Activated CD8-positive, alpha-beta T cell treated with anti-CD3 and anti-CD28 coated beads for 36 hours (primary cell): ENCODE measurements at regions of chr13 and their contacts with region 1.

Region 1: DNA sequence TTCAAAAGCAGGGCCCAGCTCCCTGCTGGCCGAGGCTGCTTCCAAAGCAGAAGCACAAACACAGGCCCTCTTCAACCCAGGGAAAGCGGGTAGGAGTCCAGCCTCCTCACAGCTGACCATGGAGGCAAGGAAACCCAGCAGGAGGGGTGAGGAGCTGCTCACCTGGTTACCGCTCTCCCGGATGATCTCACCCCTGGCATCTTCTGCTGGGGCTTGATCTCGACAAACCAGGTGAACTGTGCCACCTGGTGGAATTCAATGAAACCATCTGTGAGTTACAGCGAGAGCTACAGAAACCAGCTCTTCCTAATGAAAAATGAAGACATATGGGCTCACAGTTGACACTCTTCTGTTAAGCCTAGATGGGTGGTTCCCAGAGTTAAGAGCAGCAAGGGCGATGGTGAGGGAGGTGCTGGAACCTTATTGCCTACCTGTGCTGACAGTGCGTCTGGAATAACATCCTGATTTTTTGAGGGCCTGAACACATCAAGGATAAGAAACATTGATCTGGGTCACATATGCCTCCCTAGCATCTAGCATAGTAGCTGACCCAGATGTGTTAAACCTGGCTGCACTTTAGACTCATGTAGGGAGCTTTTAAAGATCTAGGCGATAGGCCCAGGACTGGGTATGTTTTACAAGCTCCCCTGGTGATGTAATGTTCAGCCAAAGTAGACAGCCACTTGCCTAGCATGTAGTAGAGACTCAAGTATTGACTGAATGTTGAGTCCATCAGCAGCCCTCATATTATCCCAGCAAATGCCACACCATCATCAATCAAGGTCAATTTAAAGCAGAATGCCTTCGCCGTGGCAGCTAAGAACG is 6.1 kb downstream of the DHRS12 start:
- DNase-seq: peak; percentile 73
- ATAC-seq: peak; percentile 55
- H3K4me3 Mint-ChIP-seq: no peak overlapping the region
- H3K27ac Mint-ChIP-seq: no peak overlapping the region
- H3K4me1 Mint-ChIP-seq: peaks cover 42% of the 10 kb centered on the region
- H3K27me3 Mint-ChIP-seq: no peaks in the 10 kb centered on the region
- CTCF ChIP-seq: peak; percentile 55

Region 2: GRCh38 chr13:51125498-51126226 is 672.2 kb before region 1 on chr13:
- CTCF ChIA-PET with region 1: interaction called, 21 read pairs
- POLR2A ChIA-PET with region 1: no interaction called
- intact Hi-C with region 1: no loop called
- DNase-seq: peak; percentile 67
- ATAC-seq: peak; percentile 72
- H3K4me3 Mint-ChIP-seq: no peak overlapping the region
- H3K27ac Mint-ChIP-seq: no peak overlapping the region
- H3K4me1 Mint-ChIP-seq: peaks cover 14% of the 10 kb centered on the region
- H3K27me3 Mint-ChIP-seq: peaks cover 19% of the 10 kb centered on the region
- CTCF ChIP-seq: peak; percentile 77

Region 3: GRCh38 chr13:51419001-51419636 is 378.8 kb before region 1 on chr13:
- CTCF ChIA-PET with region 1: interaction called, 10 read pairs
- POLR2A ChIA-PET with region 1: no interaction called
- intact Hi-C with region 1: no loop called
- DNase-seq: no peak
- ATAC-seq: no peak
- H3K4me3 Mint-ChIP-seq: no peak overlapping the region
- H3K27ac Mint-ChIP-seq: no peak overlapping the region
- H3K4me1 Mint-ChIP-seq: peaks cover 73% of the 10 kb centered on the region
- H3K27me3 Mint-ChIP-seq: no peaks in the 10 kb centered on the region
- CTCF ChIP-seq: no peak

Region 4: GRCh38 chr13:51444922-51445321 is 353.0 kb before region 1 on chr13:
- CTCF ChIA-PET with region 1: interaction called, 29 read pairs
- POLR2A ChIA-PET with region 1: interaction called, 7 read pairs
- intact Hi-C with region 1: no loop called
- DNase-seq: no peak
- ATAC-seq: no peak
- H3K4me3 Mint-ChIP-seq: no peak overlapping the region
- H3K27ac Mint-ChIP-seq: no peak overlapping the region
- H3K4me1 Mint-ChIP-seq: peaks cover 16% of the 10 kb centered on the region
- H3K27me3 Mint-ChIP-seq: no peaks in the 10 kb centered on the region
- CTCF ChIP-seq: peak; percentile 33

Region 5: GRCh38 chr13:51534041-51534817 is 263.6 kb before region 1 on chr13:
- CTCF ChIA-PET with region 1: interaction called, 10 read pairs
- POLR2A ChIA-PET with region 1: interaction called, 3 read pairs
- intact Hi-C with region 1: no loop called
- DNase-seq: peak; percentile 60
- ATAC-seq: peak; percentile 64
- H3K4me3 Mint-ChIP-seq: no peak overlapping the region
- H3K27ac Mint-ChIP-seq: peak overlapping the region; percentile 52
- H3K4me1 Mint-ChIP-seq: peaks cover 36% of the 10 kb centered on the region
- H3K27me3 Mint-ChIP-seq: no peaks in the 10 kb centered on the region
- CTCF ChIP-seq: no peak

Region 6: DNA sequence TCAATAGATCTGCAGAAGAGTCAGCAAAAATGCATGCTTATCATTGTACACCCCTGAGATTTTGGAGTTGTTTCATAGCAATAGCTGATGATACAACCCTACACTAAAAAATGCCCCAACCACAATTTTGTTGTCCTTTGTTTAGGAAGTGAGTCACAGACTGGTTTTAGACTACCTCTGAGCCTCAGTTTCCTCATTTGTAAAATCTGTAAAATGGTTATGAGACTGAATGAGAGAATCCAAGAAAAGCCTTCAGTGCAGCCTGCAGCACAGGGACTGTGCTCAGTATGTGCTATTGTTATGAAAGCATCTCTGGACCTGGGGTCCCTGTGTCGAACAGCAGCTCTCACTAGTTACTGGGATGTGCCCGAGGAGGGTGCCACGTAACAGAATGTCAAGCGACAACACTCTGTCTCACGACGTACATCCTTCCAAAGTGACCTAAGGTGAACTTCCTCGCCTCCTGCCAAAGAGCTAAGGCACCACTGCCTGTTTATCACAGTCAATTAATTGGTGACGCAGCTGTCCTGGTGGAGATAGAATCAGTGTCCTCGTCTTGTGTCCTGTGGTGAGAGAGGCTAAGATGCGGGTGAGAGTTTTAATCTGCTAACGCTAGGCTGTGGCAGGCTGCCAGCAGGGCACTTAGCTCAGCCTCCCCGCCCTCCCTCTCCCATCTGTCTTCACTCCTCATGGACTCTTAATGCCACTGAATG is 12.0 kb before region 1 on chr13:
- CTCF ChIA-PET with region 1: interaction called, 15 read pairs
- POLR2A ChIA-PET with region 1: interaction called, 3 read pairs
- intact Hi-C with region 1: no loop called
- DNase-seq: no peak
- ATAC-seq: no peak
- H3K4me3 Mint-ChIP-seq: no peak overlapping the region
- H3K27ac Mint-ChIP-seq: no peak overlapping the region
- H3K4me1 Mint-ChIP-seq: peaks cover 1% of the 10 kb centered on the region
- H3K27me3 Mint-ChIP-seq: no peaks in the 10 kb centered on the region
- CTCF ChIP-seq: no peak

Region 7: DNA sequence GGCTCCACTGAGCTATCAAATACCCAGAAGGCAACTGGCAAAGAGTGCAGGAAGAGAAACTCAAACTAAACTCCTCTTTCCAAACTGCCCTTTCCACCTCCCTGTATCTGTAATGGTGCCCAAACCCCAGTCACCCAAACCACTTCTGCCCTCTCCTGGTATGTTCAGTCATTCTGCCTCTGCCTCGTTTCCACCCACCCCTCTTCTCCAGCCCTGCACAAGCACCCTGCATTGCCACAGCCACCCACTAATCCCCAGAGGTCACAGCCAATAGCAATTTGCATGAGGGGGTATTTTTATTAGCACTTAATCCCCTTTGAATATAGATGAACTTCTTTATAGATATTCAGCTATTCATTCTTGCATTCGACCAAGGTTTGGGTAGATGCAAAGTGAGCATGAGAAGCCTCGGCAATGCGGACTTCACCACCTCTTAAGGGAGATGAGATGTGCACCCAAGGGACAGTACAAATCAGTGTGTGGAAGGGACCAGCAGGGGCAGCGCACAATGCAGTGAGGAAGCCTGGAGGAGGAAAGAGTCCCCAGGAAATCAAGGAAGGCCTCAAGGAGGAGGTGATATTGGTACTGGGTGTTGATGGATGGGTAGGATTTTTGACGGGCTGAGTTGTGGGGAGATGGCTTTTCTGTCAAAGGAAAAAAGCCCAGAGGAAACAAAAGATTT is 34.7 kb after region 1 on chr13:
- CTCF ChIA-PET with region 1: interaction called, 12 read pairs
- POLR2A ChIA-PET with region 1: interaction called, 11 read pairs
- intact Hi-C with region 1: no loop called
- DNase-seq: peak; percentile 73
- ATAC-seq: peak; percentile 98
- H3K4me3 Mint-ChIP-seq: no peak overlapping the region
- H3K27ac Mint-ChIP-seq: no peak overlapping the region
- H3K4me1 Mint-ChIP-seq: peaks cover 59% of the 10 kb centered on the region
- H3K27me3 Mint-ChIP-seq: no peaks in the 10 kb centered on the region
- CTCF ChIP-seq: peak; percentile 68